ENCODE measurements at regions of chr3 and their contacts with region 1.

Region 1: DNA sequence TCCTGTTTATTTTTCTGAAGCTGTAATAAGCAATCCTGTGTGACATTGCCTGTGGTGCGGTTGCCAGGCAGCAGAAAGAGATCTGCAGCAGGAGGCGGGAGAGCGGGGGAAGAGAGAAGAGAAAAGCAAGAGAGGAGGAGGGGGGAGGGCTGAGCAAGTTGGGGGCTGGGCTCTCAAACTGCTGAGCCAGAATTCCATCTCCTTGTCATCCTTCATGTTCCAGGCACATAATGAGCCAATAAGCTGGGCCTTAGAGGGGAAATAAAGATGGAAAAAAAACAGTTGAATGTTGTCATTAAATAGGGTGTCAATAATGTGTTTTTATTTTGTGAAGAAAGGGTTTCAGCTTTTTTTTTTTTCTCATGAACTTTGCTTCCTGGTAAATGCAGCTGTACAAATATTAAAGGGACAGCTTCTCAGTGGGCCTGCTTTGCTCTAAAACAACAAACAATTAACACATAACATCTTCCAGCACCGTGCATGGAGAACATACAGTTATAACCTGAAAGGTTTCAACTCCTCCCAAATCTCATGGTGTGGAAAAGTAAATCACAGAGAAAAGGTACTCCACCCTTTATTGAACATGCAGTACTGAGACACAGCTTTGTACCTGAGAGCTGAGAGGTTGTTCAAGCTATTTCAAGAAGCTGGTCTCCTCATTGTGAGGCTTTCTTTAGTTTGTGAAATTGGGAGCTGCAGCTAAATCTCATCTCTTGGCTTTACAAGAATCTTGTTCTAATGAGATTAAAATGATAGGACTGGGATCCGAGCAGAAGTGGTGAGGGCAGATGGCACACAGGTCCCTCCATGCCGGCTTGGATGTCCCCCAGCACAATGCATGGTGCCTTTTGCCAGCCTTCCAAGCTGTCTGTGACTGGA is 451.1 kb upstream of the KCNMB2 start:
- DNase-seq: peak; percentile 88
- H3K4me3 ChIP-seq: no peak overlapping the region
- H3K27ac ChIP-seq: peak overlapping the region; percentile 60 to 69
- H3K4me1 ChIP-seq: peaks cover 16% of the 10 kb centered on the region
- H3K27me3 ChIP-seq: no peaks in the 10 kb centered on the region
- CTCF ChIP-seq: no peak
- POLR2A ChIP-seq: no peak

Region 2: DNA sequence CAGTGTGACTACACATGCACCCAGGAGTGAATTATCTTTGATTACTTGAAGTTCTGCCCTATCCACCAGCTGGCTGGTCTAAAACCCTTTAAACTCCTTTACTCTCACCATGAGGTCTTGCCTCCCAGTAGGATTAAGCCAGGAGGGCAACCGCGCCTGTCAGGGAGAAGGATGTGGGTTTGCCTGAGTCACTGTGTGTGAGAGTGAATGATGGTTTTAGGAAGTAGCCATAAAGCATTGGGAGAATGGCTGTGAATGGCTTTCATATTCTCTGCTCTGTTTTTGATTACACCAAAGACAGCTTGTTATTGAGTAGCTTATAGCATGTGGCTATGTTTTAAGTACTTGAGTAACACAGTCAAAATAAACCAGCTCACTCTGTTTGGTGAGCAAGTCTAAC is 250.2 kb before region 1 on chr3:
- intact Hi-C with region 1: loop called (anchors 10 kb)
- DNase-seq: no peak
- H3K4me3 ChIP-seq: no peak overlapping the region
- H3K27ac ChIP-seq: no peak overlapping the region
- H3K4me1 ChIP-seq: no peaks in the 10 kb centered on the region
- H3K27me3 ChIP-seq: no peaks in the 10 kb centered on the region
- CTCF ChIP-seq: no peak
- POLR2A ChIP-seq: no peak

Measured in prostate gland (tissue), 2 donors.